Mammary epithelial cell (primary cell): ENCODE measurements at regions of chr16 and their contacts with region 1.

Region 1: DNA sequence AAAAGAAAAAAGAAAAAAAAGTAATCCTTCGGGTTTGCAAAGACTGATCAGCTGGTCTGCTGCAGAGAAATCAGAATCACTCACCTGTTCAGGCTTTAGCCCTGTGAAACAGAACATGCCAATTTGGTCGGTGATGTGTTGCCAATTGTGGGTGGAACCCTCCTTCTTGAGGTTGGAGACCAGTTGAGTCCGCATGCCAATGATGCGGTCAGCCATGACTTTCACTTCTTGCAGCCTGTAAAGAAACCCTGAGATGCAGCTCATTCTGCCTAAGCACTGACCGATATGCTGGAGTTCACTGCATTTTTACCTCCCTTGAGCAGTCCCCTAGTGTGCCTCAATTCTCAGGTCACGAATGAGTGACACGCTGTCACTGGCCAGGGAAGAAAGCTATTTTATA is 24.8 kb upstream of the SLC38A7 start:
- DNase-seq: no peak
- H3K4me3 ChIP-seq: no peak overlapping the region
- H3K27ac ChIP-seq: no peak overlapping the region
- H3K4me1 ChIP-seq: no peaks in the 10 kb centered on the region
- H3K27me3 ChIP-seq: no peaks in the 10 kb centered on the region
- CTCF ChIP-seq: no peak

Region 2: DNA sequence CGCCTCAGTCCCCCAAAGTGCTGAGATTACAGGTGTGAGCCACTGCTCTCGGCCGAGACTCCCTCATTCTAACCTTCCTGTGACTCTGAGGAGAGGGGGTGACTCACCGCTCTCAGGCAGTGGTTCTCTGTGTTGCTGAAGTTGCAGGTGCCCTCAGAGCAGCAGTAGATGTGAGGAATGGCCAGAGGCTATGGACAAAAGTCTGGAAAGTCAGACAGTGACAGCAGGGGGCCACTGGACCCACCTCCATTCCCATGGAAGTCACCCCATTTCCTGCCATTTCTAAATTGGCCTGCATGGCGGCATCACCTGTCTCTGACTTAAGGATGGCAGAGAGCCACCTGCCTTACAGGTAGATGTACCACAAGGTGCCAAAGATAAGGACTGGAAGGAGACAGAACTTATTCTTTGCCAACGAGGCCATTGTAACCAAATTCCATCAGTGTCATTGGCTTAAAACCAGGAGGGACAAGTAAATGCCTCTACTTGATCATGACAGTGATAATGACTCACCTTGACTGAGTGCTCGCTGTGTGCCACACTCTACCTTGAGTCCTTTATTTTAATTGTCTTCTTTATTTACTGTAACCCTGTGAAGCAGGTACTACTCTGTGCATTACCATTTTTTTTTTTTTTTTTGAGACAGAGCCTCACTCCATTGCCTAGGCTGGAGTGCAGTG is 64.4 kb before region 1 on chr16:
- CTCF ChIA-PET with region 1: no interaction called
- dilution Hi-C with region 1: loop called (anchors 5 kb)
- in situ Hi-C with region 1: no loop called
- intact Hi-C with region 1: no loop called
- DNase-seq: peak; percentile 72
- H3K4me3 ChIP-seq: no peak overlapping the region
- H3K27ac ChIP-seq: no peak overlapping the region
- H3K4me1 ChIP-seq: no peaks in the 10 kb centered on the region
- H3K27me3 ChIP-seq: no peaks in the 10 kb centered on the region
- CTCF ChIP-seq: no peak

Region 3: DNA sequence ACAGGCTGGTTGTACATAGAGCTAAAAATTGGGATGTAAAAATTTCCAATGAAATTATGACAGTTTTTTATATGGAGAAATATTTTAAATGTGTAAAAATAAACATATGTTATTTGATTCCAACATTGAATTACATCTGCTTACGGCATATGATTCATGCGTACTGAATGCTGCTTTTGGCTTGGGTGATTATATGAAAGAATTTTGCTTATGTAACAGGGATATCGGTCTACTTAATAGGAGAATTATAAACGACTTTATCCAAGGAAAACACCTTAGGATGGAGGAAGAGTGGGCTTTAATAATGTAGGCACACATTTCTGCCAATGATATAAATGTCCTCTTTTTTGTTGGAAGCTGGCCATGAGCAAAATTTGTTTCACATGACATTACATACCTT is 222.1 kb after region 1 on chr16:
- CTCF ChIA-PET with region 1: no interaction called
- dilution Hi-C with region 1: no loop called
- in situ Hi-C with region 1: no loop called
- intact Hi-C with region 1: no loop called
- DNase-seq: no peak
- H3K4me3 ChIP-seq: no peak overlapping the region
- H3K27ac ChIP-seq: no peak overlapping the region
- H3K4me1 ChIP-seq: no peaks in the 10 kb centered on the region
- H3K27me3 ChIP-seq: no peaks in the 10 kb centered on the region
- CTCF ChIP-seq: no peak